B cell (primary cell): ENCODE measurements at regions of chr10 and their contacts with region 1.

Region 1: GRCh38 chr10:67884313-67884841 is at the start of gene SIRT1:
- DNase-seq: peak; percentile 97
- ATAC-seq: peak; percentile 78
- H3K4me3 ChIP-seq: peak within 1 kb of the TSS; percentile 74 to 89 (median 79)
- H3K4me3 Mint-ChIP-seq: peak within 1 kb of the TSS; percentile 90
- H3K27ac ChIP-seq: peak within 1 kb of the TSS; percentile 82 to 90
- H3K27ac Mint-ChIP-seq: peak within 1 kb of the TSS; percentile 99
- H3K4me1 ChIP-seq: peaks cover 5 to 19% of the 10 kb centered on the region in 2 donors
- H3K4me1 Mint-ChIP-seq: peaks cover 34% of the 10 kb centered on the region
- H3K27me3 ChIP-seq: no peaks in the 10 kb centered on the region
- H3K27me3 Mint-ChIP-seq: no peaks in the 10 kb centered on the region
- CTCF ChIP-seq: no peak
- total RNA-seq, gene SIRT1: 66.5 and 67.8 TPM in 2 replicates

Region 2: DNA sequence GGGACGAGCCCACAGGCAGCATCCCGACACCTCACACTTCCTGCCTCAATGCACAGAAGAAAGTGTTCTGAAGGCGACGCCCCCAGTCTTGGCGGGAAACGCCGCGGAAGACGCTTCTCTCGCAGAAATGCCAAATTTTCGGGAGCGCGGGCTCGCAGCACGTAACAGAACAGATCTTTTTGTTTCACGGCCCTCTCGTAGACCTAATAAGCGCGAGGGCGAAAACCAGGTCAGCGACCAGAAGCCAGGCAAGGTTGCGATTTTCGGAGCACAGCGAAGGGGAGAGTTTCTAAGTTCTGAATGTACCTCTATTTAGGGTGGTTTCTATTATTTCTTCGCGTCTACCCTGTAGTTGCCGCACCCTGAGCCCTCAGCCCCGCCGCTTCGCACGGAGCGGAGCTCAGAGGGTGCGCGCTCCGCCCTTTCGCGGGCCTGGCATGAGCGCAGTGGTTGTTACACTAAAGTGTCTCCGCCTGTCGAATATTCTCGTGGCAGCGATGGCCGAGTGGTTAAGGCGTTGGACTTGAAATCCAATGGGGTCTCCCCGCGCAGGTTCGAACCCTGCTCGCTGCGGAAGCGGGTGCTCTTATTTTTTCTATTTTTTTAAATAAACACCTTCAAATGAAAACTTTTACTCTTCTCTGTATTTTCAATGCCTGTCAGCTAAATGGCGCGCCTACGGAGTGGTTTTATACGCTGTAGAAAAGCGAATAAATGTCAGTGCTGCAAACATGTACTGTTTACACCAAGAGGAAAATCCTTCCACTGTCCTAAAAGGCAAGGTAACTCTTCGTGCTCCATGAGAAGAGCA is 120.2 kb before region 1 on chr10:
- CTCF ChIA-PET with region 1: no interaction called
- POLR2A ChIA-PET with region 1: no interaction called
- intact Hi-C with region 1: loop called (anchors 2 kb)
- DNase-seq: peak; percentile 99
- ATAC-seq: peak; percentile 77
- H3K4me3 ChIP-seq: peak overlapping the region; percentile 74 to 93 (median 92)
- H3K4me3 Mint-ChIP-seq: peak overlapping the region; percentile 91
- H3K27ac ChIP-seq: peak overlapping the region; percentile 84 to 86
- H3K27ac Mint-ChIP-seq: peak overlapping the region; percentile 100
- H3K4me1 ChIP-seq: peaks cover 9 to 20% of the 10 kb centered on the region in 2 donors
- H3K4me1 Mint-ChIP-seq: peaks cover 28% of the 10 kb centered on the region
- H3K27me3 ChIP-seq: no peaks in the 10 kb centered on the region
- H3K27me3 Mint-ChIP-seq: no peaks in the 10 kb centered on the region
- CTCF ChIP-seq: no peak

Region 3: DNA sequence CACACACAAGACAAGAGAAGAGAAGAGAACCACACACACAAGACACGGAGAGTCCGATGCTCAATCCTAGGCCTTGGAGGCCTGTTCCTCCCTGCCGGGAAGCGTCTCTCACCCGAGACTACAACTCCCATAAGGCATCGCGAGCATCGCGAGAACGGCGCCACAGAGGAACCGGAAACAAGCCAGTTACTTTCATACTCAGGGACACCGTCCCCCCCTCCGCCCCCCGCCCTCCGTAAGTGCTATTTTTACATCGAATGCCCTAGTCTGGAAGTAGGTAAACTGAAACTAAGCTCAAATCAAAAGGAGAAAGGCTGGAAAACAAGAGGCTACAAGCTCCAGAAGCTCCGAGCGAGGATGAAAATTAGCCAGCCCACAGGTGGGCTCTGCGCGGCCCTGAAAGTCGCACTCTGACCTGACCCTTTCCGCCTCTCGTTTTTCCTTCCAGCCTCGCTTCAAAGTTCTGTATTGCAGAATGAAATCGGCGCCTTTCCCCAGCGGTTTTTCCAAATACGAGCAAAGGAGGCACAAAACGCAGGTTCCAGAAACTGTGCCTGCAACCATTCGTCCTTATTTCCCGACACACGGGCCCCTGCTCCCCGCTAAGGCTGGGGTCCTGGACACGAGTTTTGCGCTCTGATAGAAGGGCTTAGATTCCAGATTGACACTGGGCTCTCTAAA is 34.9 kb before region 1 on chr10:
- CTCF ChIA-PET with region 1: interaction called, 35 read pairs
- POLR2A ChIA-PET with region 1: interaction called, 4 read pairs
- intact Hi-C with region 1: loop called (anchors 1 kb)
- DNase-seq: peak; percentile 93
- ATAC-seq: peak; percentile 99
- H3K4me3 ChIP-seq: peak overlapping the region; percentile 79 to 98 (median 96)
- H3K4me3 Mint-ChIP-seq: peak overlapping the region; percentile 97
- H3K27ac ChIP-seq: peak overlapping the region; percentile 89 to 91
- H3K27ac Mint-ChIP-seq: peak overlapping the region; percentile 97
- H3K4me1 ChIP-seq: peaks cover 5 to 9% of the 10 kb centered on the region in 2 donors
- H3K4me1 Mint-ChIP-seq: peaks cover 8% of the 10 kb centered on the region
- H3K27me3 ChIP-seq: no peaks in the 10 kb centered on the region
- H3K27me3 Mint-ChIP-seq: no peaks in the 10 kb centered on the region
- CTCF ChIP-seq: no peak

Region 4: DNA sequence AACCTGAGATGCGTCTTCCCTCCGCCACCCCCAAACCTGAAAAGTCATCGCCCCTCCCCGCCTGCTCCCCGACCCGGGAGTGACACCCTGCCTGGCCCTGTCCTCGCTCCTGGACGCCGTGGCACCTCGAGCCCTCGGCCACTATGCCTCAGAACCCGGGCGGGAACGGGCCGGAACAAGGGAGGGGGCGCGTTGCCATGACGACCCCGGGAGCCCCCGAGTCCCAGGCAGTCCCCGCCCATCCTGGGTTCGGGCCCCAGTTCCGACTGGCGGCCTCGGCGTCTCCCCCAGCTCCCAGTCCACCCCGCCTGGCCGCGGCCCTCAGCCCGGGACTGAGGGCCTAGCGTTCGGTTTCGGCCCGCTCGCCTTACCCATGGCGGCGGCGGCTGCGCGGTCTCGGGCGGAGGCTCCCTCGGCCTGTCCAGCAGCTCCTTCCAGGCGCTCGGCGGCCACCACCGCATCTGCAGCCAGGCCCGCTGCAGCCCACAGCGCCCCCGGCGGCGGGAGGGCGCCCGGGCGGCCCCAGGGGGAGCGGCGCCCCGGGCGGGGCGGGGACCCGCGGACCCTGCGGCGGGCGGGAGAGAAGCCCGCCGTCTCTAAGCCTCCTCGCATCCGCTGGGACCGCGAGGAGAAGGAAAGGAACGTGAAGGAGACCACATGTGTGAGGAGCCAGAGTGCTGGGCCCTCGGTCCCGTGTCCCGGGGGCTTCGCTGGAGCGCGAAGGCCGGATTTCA is 522.6 kb after region 1 on chr10 and contains the start of gene RUFY2:
- CTCF ChIA-PET with region 1: no interaction called
- POLR2A ChIA-PET with region 1: no interaction called
- intact Hi-C with region 1: loop called (anchors 2 kb)
- DNase-seq: peak; percentile 91
- ATAC-seq: peak; percentile 93
- H3K4me3 ChIP-seq: peak within 1 kb of the TSS; percentile 79 to 94 (median 91)
- H3K4me3 Mint-ChIP-seq: peak within 1 kb of the TSS; percentile 92
- H3K27ac ChIP-seq: peak within 1 kb of the TSS; percentile 51 to 83
- H3K27ac Mint-ChIP-seq: peak within 1 kb of the TSS; percentile 89
- H3K4me1 ChIP-seq: peaks cover 6 to 9% of the 10 kb centered on the region in 2 donors
- H3K4me1 Mint-ChIP-seq: peaks cover 22% of the 10 kb centered on the region
- H3K27me3 ChIP-seq: no peaks in the 10 kb centered on the region
- H3K27me3 Mint-ChIP-seq: no peaks in the 10 kb centered on the region
- CTCF ChIP-seq: peak; percentile 73
- total RNA-seq, gene RUFY2: 38.7 and 41.6 TPM in 2 replicates